ENCODE measurements at regions of chr11 and their contacts with region 1.

Region 1: DNA sequence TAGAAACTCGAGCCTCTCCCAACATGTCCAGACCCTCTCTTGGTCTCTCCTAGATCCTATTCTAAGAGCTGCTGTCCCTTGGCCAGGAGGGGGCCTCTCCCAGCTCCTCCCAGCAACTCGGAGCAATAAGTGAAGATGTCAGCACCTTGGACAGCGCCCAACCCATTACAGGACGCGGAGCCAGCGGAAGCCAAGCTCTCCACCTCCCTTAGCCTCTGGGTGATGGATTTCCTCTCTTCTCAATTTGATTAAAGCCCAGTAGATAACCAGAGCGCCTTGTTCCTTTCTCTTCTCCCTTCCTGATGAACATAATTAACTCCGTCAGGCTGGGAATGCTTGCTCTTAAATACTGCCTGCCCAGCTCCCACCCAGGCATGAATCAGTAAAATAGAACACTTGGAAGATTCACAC is 26.2 kb upstream of the TPBGL start:
- DNase-seq: peak; percentile 66
- H3K4me3 ChIP-seq: no peak overlapping the region
- H3K27ac ChIP-seq: no peak overlapping the region
- H3K4me1 ChIP-seq: no peaks in the 10 kb centered on the region
- H3K27me3 ChIP-seq: peaks cover 3% of the 10 kb centered on the region
- CTCF ChIP-seq: peak; percentile 26 to 53

Region 2: DNA sequence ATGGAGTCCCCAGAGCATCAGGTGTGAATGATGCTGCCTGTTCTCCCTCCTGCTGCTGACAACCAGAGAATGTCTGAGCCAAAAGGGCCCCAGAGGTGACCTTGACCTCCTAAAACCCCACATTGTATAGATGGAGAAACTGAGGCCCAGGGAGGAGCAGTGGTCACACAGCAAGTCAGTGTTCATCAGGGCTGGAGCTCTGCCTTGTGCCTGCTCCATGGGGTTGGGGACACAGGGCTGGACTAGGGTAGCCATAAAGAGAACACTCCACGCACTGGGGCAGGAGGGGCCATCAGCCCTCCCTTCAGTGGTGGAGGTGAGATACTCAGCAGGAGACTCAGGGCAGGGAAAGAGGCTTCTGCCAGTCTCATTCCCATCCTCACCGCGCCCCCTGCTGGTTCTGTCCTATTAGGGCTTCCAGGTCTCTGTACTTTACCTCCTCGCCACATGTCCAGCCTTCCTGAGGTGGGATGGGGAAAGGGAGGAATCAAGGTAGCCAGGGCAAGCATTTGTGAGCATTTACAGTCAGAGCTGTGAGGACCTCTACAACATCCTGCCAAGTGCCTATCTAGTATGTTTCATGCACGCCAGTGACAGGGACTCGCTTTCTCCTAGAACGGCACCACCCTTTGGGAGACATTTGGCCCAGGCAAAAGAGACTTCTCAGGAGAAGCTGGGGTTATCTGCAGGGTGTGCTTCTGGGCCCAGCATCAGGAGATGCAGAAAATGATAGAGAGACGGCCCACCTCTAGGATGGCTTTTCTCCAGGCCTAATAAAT is 182.5 kb before region 1 on chr11:
- CTCF ChIA-PET with region 1: no interaction called
- dilution Hi-C with region 1: loop called (anchors 5 kb)
- in situ Hi-C with region 1: no loop called
- intact Hi-C with region 1: no loop called
- DNase-seq: peak; percentile 51
- H3K4me3 ChIP-seq: no peak overlapping the region
- H3K27ac ChIP-seq: no peak overlapping the region
- H3K4me1 ChIP-seq: peaks cover 5% of the 10 kb centered on the region
- H3K27me3 ChIP-seq: no peaks in the 10 kb centered on the region
- CTCF ChIP-seq: peak; percentile 89 to 92

Region 3: GRCh38 chr11:75233742-75234172 is 19.3 kb after region 1 on chr11:
- CTCF ChIA-PET with region 1: no interaction called
- dilution Hi-C with region 1: no loop called
- in situ Hi-C with region 1: no loop called
- intact Hi-C with region 1: loop called (anchors 1 kb)
- DNase-seq: peak; percentile 37
- H3K4me3 ChIP-seq: no peak overlapping the region
- H3K27ac ChIP-seq: no peak overlapping the region
- H3K4me1 ChIP-seq: no peaks in the 10 kb centered on the region
- H3K27me3 ChIP-seq: no peaks in the 10 kb centered on the region
- CTCF ChIP-seq: no peak

Measured in mammary epithelial cell (primary cell).